ENCODE measurements at regions of chr2 and their contacts with region 1.

Region 1: GRCh38 chr2:46650556-46651001 is 171.2 kb downstream of the TMEM247 start:
- DNase-seq: peak; percentile 77
- ATAC-seq: peak; percentile 94
- H3K4me3 ChIP-seq: no peak overlapping the region
- H3K27ac ChIP-seq: no peak overlapping the region
- H3K4me1 ChIP-seq: peaks cover 0 to 5% of the 10 kb centered on the region in 2 experiments; a peak in 1 of 4 replicates
- H3K27me3 ChIP-seq: no peaks in the 10 kb centered on the region
- CTCF ChIP-seq: peak; percentile 86 to 95 (median 89)
- POLR2A ChIP-seq: no peak
- RAD21 ChIP-seq: peak; percentile 94

Region 2: GRCh38 chr2:45993476-45993991 is 657.0 kb before region 1 on chr2:
- CTCF ChIA-PET with region 1: no interaction called
- POLR2A ChIA-PET with region 1: no interaction called
- RAD21 ChIA-PET with region 1: no interaction called
- intact Hi-C with region 1: loop called (anchors 10 kb)
- DNase-seq: peak; percentile 64
- ATAC-seq: peak; percentile 86
- H3K4me3 ChIP-seq: no peak overlapping the region
- H3K27ac ChIP-seq: no peak overlapping the region
- H3K4me1 ChIP-seq: peaks cover 0 to 21% of the 10 kb centered on the region in 2 experiments; a peak in 1 of 4 replicates
- H3K27me3 ChIP-seq: no peaks in the 10 kb centered on the region
- CTCF ChIP-seq: peak; percentile 58 to 82 (median 76); a peak in 5 of 6 replicates
- POLR2A ChIP-seq: no peak
- RAD21 ChIP-seq: peak; percentile 79

Region 3: GRCh38 chr2:46909771-46910419 is 259.3 kb after region 1 on chr2:
- CTCF ChIA-PET with region 1: no interaction called
- POLR2A ChIA-PET with region 1: no interaction called
- RAD21 ChIA-PET with region 1: no interaction called
- intact Hi-C with region 1: no loop called
- DNase-seq: peak; percentile 94
- ATAC-seq: peak; percentile 92
- H3K4me3 ChIP-seq: peak overlapping the region in 1 of 2 experiments; percentile 25; a peak in 2 of 4 replicates
- H3K27ac ChIP-seq: peak overlapping the region; percentile 55; the same call in 1 of the 2 replicates
- H3K4me1 ChIP-seq: peaks cover 34 to 66% of the 10 kb centered on the region in 2 experiments
- H3K27me3 ChIP-seq: no peaks in the 10 kb centered on the region
- CTCF ChIP-seq: no peak
- POLR2A ChIP-seq: no peak
- RAD21 ChIP-seq: no peak

Measured in HCT116 (cell line).